SK-N-SH (cell line): ENCODE measurements at regions of chr7 and their contacts with region 1.

Region 1: GRCh38 chr7:4883374-4884144 is at the start of gene RADIL:
- DNase-seq: peak; percentile 100
- H3K4me3 ChIP-seq: peak within 1 kb of the TSS; percentile 70 to 75
- H3K27ac ChIP-seq: peak within 1 kb of the TSS; percentile 89 to 97
- H3K4me1 ChIP-seq: peaks cover 5 to 31% of the 10 kb centered on the region in 2 experiments; a peak in 1 of 4 replicates
- H3K27me3 ChIP-seq: no peaks in the 10 kb centered on the region
- CTCF ChIP-seq: peak; percentile 98
- EP300 ChIP-seq: no peak
- RAD21 ChIP-seq: peak; percentile 85
- polyA plus RNA-seq, gene RADIL: 3.5 and 4.3 TPM in 2 replicates

Region 2: DNA sequence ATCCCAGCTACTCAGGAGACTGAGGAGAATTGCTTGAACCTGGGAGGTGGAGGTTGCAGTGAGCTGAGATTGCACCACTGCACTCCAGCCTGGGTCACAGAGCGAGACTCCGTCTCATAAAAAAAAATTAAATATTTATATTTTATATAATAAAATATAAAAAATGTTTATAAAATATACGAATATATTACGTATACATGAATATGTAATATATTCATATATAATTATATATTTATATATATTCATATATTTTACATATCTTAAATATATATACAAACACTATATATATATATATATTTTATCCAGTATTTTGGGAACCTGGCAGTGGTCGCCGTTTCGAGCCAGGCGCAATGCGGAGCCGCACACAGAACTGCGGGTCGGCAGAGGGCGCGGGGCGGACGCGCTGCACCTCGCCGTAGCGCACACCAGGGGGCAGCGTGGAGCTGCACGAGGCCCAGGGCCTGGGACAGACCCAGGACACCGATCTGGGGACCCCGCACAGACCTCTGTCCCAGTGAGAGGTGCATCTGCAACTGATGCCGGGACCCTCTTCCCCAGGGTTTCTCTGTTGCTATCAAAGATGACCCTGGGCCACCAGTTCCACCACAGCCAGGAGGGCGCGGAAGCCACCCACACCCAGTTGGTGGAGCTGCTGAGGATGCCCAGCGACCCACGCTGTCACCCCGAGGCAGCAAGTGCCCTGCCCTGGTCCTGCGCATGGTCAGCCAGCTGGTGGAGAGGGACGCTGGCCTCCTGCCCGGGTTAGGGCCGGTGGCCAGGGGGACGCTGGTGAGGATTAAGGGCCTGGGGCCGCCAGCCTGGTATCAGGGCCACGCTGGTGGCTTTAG is 85.5 kb before region 1 on chr7:
- CTCF ChIA-PET with region 1: interaction called, 63 read pairs
- POLR2A ChIA-PET with region 1: interaction called, 12 read pairs
- DNase-seq: peak; percentile 97
- H3K4me3 ChIP-seq: no peak overlapping the region
- H3K27ac ChIP-seq: peak overlapping the region in 1 of 2 experiments; percentile 41; a peak in 1 of 4 replicates
- H3K4me1 ChIP-seq: peaks cover 0 to 9% of the 10 kb centered on the region in 2 experiments; a peak in 1 of 4 replicates
- H3K27me3 ChIP-seq: no peaks in the 10 kb centered on the region
- CTCF ChIP-seq: peak; percentile 76
- EP300 ChIP-seq: no peak
- RAD21 ChIP-seq: peak; percentile 69

Region 3: DNA sequence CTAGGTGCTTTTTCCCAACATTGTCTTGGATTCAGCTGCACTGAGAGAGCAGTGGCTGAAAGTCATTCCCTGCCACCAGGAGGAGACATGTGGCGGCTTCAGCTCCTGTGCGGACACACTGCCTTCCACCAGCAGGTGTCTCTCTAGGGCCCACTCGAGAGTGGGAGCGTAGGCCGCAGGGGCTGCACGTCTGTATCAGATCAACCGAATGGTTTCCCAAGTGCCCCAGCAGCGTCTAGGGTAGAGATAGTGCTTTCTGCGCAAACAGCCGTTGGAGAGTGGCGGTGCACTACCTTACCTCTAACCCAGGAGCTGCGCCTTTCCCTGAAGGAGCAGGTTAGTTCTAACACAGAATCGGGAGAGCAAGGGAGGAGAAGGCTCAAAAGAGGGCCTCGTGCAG is 53.4 kb before region 1 on chr7:
- CTCF ChIA-PET with region 1: interaction called, 235 read pairs
- POLR2A ChIA-PET with region 1: interaction called, 14 read pairs
- DNase-seq: peak; percentile 95
- H3K4me3 ChIP-seq: no peak overlapping the region; a peak in 1 of 4 replicates
- H3K27ac ChIP-seq: no peak overlapping the region; a peak in 1 of 4 replicates
- H3K4me1 ChIP-seq: peaks cover 0 to 5% of the 10 kb centered on the region in 2 experiments; a peak in 1 of 4 replicates
- H3K27me3 ChIP-seq: no peaks in the 10 kb centered on the region
- CTCF ChIP-seq: peak; percentile 72
- EP300 ChIP-seq: no peak; a peak in 1 of 4 replicates
- RAD21 ChIP-seq: peak; percentile 98

Region 4: GRCh38 chr7:4856336-4857057 is 27.1 kb before region 1 on chr7:
- CTCF ChIA-PET with region 1: interaction called, 645 read pairs
- POLR2A ChIA-PET with region 1: interaction called, 15 read pairs
- DNase-seq: peak; percentile 85
- H3K4me3 ChIP-seq: no peak overlapping the region
- H3K27ac ChIP-seq: peak overlapping the region in 1 of 2 experiments; percentile 82; a peak in 2 of 4 replicates
- H3K4me1 ChIP-seq: peaks cover 0 to 11% of the 10 kb centered on the region in 2 experiments; a peak in 2 of 4 replicates
- H3K27me3 ChIP-seq: no peaks in the 10 kb centered on the region
- CTCF ChIP-seq: no peak
- EP300 ChIP-seq: peak in 1 of 2 experiments; percentile 48; a peak in 2 of 4 replicates
- RAD21 ChIP-seq: no peak; the same call in 1 of the 2 replicates

Region 5: GRCh38 chr7:4906682-4907081 is 23.1 kb after region 1 on chr7:
- CTCF ChIA-PET with region 1: interaction called, 13 read pairs
- POLR2A ChIA-PET with region 1: no interaction called
- DNase-seq: no peak
- H3K4me3 ChIP-seq: no peak overlapping the region
- H3K27ac ChIP-seq: no peak overlapping the region
- H3K4me1 ChIP-seq: peaks cover 0 to 2% of the 10 kb centered on the region in 2 experiments; a peak in 1 of 4 replicates
- H3K27me3 ChIP-seq: peaks cover 4% of the 10 kb centered on the region; the same call in 1 of the 2 replicates
- CTCF ChIP-seq: no peak
- EP300 ChIP-seq: no peak
- RAD21 ChIP-seq: no peak

Region 6: DNA sequence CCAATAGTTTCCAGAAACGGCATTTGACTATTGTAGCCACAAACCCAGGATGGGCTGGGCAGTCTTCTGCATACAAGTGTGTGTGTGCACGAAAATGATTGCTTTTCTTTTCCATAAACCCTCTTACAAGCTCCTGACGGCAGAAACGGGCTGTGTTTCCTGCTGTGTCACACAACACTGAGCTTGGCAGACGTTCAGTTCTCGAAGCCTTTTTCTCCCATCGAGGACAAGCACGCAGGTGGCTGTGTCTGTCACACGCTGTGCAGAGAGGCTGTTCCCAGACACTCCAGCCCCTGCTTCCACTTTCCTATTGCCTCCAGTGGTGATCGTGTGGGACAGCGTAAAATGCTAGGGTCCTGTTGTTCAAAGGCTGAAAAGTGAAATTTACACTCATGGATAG is 194.2 kb after region 1 on chr7:
- CTCF ChIA-PET with region 1: interaction called, 10 read pairs
- POLR2A ChIA-PET with region 1: no interaction called
- DNase-seq: peak; percentile 47
- H3K4me3 ChIP-seq: peak overlapping the region; percentile 2 to 9; a peak in 1 of 4 replicates
- H3K27ac ChIP-seq: no peak overlapping the region
- H3K4me1 ChIP-seq: peaks cover 0 to 5% of the 10 kb centered on the region in 2 experiments; a peak in 1 of 4 replicates
- H3K27me3 ChIP-seq: peaks cover 18% of the 10 kb centered on the region; the same call in 1 of the 2 replicates
- CTCF ChIP-seq: no peak
- EP300 ChIP-seq: no peak
- RAD21 ChIP-seq: no peak

Region 7: DNA sequence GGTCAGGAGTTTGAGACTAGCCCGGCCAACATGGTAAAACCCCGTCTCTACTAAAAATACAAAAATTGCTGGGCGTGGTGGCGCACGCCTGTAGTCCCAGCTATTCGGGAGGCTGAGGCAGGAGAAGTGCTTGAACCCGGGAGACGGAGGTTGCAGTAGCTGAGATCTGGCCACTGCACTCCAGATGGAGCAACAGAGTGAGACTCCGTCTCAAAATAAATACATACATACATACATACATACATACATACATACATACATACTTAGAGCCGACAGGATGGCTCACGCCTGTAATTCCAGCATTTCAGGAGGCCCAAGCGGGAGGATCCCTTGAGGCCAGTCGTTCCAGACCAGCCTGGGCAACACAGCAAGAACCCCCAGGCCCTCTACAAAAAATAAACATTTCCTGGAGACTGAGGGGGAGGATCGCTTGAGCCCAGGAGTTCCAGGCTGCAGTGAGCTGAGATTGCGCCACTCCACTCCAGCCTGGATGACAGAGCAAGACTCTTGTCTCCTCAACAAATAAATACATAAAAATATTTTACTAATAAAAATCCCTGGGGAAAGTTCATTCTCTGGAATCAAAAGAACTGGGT is 631.0 kb after region 1 on chr7:
- CTCF ChIA-PET with region 1: no interaction called
- POLR2A ChIA-PET with region 1: no interaction called
- DNase-seq: no peak
- H3K4me3 ChIP-seq: peak overlapping the region; percentile 60 to 100
- H3K27ac ChIP-seq: peak overlapping the region in 1 of 2 experiments; percentile 90; a peak in 3 of 4 replicates
- H3K4me1 ChIP-seq: peaks cover 8 to 10% of the 10 kb centered on the region in 2 experiments; a peak in 3 of 4 replicates
- H3K27me3 ChIP-seq: no peaks in the 10 kb centered on the region
- CTCF ChIP-seq: no peak
- EP300 ChIP-seq: no peak
- RAD21 ChIP-seq: no peak